Naive thymus-derived CD4-positive, alpha-beta T cell (primary cell): ENCODE measurements at regions of chr1 and their contacts with region 1.

Region 1: GRCh38 chr1:160777486-160778089 is 18.4 kb upstream of the LY9 start:
- DNase-seq: peak in 7 of 9 donors; percentile 50 to 74 (median 68)
- ATAC-seq: peak; percentile 80
- H3K4me3 ChIP-seq: no peak overlapping the region
- H3K4me3 Mint-ChIP-seq: no peak overlapping the region
- H3K27ac ChIP-seq: no peak overlapping the region
- H3K27ac Mint-ChIP-seq: peak overlapping the region in 4 of 9 donors; percentile 17 to 80 (median 37)
- H3K4me1 ChIP-seq: peaks cover 0 to 11% of the 10 kb centered on the region in 2 donors
- H3K4me1 Mint-ChIP-seq: peaks cover 12 to 42% (median 15%) of the 10 kb centered on the region in 7 donors
- H3K27me3 ChIP-seq: no peaks in the 10 kb centered on the region
- H3K27me3 Mint-ChIP-seq: no peaks in the 10 kb centered on the region

Region 2: DNA sequence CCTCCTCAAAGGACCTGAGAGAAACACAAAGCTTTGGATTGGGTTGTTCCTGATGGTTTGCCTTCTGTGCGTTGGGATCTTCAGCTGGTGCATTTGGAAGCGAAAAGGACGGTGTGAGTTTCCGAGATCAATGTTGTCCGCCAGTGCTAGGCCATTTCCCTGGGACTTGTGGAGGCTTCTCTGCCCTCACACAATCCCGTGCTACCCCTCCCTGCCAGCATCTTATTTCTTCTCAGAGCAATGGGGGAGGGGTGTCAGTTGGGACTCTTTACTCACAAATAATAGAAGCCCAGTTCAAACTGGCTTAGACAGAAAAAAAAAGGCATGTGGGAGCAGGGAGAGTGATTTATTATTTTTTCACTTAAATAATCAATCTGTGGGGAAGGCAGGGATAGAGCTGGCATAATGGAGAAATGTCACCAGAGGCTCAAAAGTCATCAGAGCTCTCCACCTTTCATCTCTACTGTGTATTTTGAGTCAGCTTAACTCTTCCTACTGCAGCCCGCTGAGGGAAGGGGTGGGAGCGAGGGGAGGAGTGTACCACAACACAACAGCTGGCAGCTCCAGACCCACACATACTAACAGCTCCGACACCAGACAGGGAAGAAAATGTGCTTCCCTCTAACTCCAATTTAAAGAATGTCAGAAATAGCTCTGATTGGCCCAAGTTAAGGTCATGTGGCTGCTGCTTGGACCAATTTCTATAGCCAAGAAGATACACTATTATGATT is 40.8 kb after region 1 on chr1:
- CTCF ChIA-PET with region 1: interaction called, 12 read pairs
- POLR2A ChIA-PET with region 1: no interaction called
- intact Hi-C with region 1: no loop called
- DNase-seq: no peak
- ATAC-seq: no peak
- H3K4me3 ChIP-seq: no peak overlapping the region
- H3K4me3 Mint-ChIP-seq: no peak overlapping the region
- H3K27ac ChIP-seq: no peak overlapping the region
- H3K27ac Mint-ChIP-seq: peak overlapping the region in 7 of 9 donors; percentile 41 to 82 (median 56)
- H3K4me1 ChIP-seq: no peaks in the 10 kb centered on the region
- H3K4me1 Mint-ChIP-seq: peaks cover 2 to 35% (median 13%) of the 10 kb centered on the region in 7 donors
- H3K27me3 ChIP-seq: no peaks in the 10 kb centered on the region
- H3K27me3 Mint-ChIP-seq: peaks cover 0 to 5% (median 0%) of the 10 kb centered on the region in 5 donors

Region 3: GRCh38 chr1:160830321-160831153 is 52.9 kb after region 1 on chr1:
- CTCF ChIA-PET with region 1: interaction called, 49 read pairs
- POLR2A ChIA-PET with region 1: interaction called, 9 read pairs
- intact Hi-C with region 1: loop called (anchors 1 kb)
- DNase-seq: peak; percentile 51 to 77 (median 67)
- ATAC-seq: peak; percentile 75
- H3K4me3 ChIP-seq: no peak overlapping the region
- H3K4me3 Mint-ChIP-seq: no peak overlapping the region
- H3K27ac ChIP-seq: peak overlapping the region; percentile 10
- H3K27ac Mint-ChIP-seq: peak overlapping the region in 8 of 9 donors; percentile 68 to 96 (median 86)
- H3K4me1 ChIP-seq: peaks cover 6 to 18% of the 10 kb centered on the region in 2 donors
- H3K4me1 Mint-ChIP-seq: peaks cover 20 to 54% (median 36%) of the 10 kb centered on the region in 7 donors
- H3K27me3 ChIP-seq: no peaks in the 10 kb centered on the region
- H3K27me3 Mint-ChIP-seq: no peaks in the 10 kb centered on the region

Region 4: GRCh38 chr1:160866001-160866694 is 88.6 kb after region 1 on chr1:
- CTCF ChIA-PET with region 1: no interaction called
- POLR2A ChIA-PET with region 1: no interaction called
- intact Hi-C with region 1: no loop called
- DNase-seq: no peak
- ATAC-seq: no peak
- H3K4me3 ChIP-seq: no peak overlapping the region
- H3K4me3 Mint-ChIP-seq: no peak overlapping the region
- H3K27ac ChIP-seq: no peak overlapping the region
- H3K27ac Mint-ChIP-seq: no peak overlapping the region
- H3K4me1 ChIP-seq: peaks cover 0 to 8% of the 10 kb centered on the region in 2 donors
- H3K4me1 Mint-ChIP-seq: peaks cover 13 to 31% (median 29%) of the 10 kb centered on the region in 7 donors
- H3K27me3 ChIP-seq: no peaks in the 10 kb centered on the region
- H3K27me3 Mint-ChIP-seq: peaks cover 0 to 16% (median 0%) of the 10 kb centered on the region in 5 donors

Region 5: GRCh38 chr1:160877221-160877620 is 99.6 kb after region 1 on chr1:
- CTCF ChIA-PET with region 1: interaction called, 5 read pairs
- POLR2A ChIA-PET with region 1: no interaction called
- intact Hi-C with region 1: loop called in 1 of 2 experiments (anchors 1 kb)
- DNase-seq: peak in 7 of 9 donors; percentile 32 to 72 (median 50)
- ATAC-seq: peak; percentile 83
- H3K4me3 ChIP-seq: no peak overlapping the region
- H3K4me3 Mint-ChIP-seq: peak overlapping the region in 2 of 10 donors; percentile 1 to 4
- H3K27ac ChIP-seq: no peak overlapping the region
- H3K27ac Mint-ChIP-seq: peak overlapping the region in 4 of 9 donors; percentile 5 to 15 (median 10)
- H3K4me1 ChIP-seq: peaks cover 8 to 10% of the 10 kb centered on the region in 2 donors
- H3K4me1 Mint-ChIP-seq: peaks cover 15 to 28% (median 23%) of the 10 kb centered on the region in 7 donors
- H3K27me3 ChIP-seq: no peaks in the 10 kb centered on the region
- H3K27me3 Mint-ChIP-seq: peaks cover 0 to 11% (median 0%) of the 10 kb centered on the region in 5 donors

Region 6: DNA sequence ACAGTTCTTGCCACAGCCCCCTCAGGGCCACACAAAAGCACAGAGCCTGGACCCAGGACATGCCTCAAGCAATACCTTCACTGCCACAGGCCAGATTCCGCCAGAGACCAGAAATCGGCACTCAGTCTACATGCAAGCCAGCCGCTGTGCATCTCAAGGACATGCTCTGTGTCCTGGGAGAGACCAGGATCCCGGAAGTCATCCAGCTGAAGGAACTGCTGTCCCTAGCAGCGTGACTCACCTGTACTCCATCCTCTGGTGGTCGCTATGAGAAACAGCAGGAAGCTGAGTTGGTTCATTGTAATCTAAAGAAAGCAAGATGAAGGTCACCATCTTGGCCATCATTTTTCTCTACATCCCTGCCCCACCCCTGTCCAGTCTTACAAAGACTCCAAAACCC is 107.0 kb after region 1 on chr1:
- CTCF ChIA-PET with region 1: no interaction called
- POLR2A ChIA-PET with region 1: no interaction called
- intact Hi-C with region 1: loop called in 1 of 2 experiments (anchors 5 kb)
- DNase-seq: peak in 2 of 9 donors; percentile 32
- ATAC-seq: no peak
- H3K4me3 ChIP-seq: no peak overlapping the region
- H3K4me3 Mint-ChIP-seq: no peak overlapping the region
- H3K27ac ChIP-seq: no peak overlapping the region
- H3K27ac Mint-ChIP-seq: no peak overlapping the region
- H3K4me1 ChIP-seq: no peaks in the 10 kb centered on the region
- H3K4me1 Mint-ChIP-seq: peaks cover 0 to 10% (median 0%) of the 10 kb centered on the region in 7 donors
- H3K27me3 ChIP-seq: no peaks in the 10 kb centered on the region
- H3K27me3 Mint-ChIP-seq: peaks cover 0 to 6% (median 0%) of the 10 kb centered on the region in 5 donors

Region 7: DNA sequence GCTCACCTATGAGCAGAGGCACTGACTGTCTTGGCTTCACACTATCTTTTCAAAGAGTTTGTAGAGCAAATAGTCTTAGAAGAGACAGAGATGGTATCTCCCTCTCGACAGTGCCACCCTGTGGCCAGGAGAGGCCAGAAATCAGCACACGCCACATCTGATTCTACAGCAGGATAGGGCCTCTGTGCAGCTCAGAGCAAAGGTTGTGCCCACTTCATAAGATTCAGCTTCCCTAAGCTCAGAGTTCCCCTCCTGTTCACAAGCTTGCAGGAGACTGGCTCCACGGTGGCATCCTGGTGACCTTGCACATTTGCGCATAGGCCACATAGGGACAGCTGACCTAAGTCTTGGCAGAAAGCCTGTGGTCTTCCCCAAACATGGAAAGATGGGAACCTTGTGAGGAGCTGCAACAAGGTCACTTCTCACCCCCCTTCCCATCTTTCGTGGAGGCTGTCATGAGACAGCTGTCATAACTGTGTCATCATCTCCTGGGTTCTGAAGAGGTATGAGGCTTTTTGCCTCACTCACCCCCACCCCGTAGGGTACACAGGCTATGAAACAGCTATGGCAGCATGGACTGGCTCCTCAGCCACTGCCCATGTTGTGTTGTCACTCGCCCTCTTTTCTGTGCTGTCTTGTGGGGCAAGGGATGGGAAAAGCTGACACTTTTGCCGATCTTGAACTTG is 174.0 kb after region 1 on chr1:
- CTCF ChIA-PET with region 1: interaction called, 44 read pairs
- POLR2A ChIA-PET with region 1: interaction called, 5 read pairs
- intact Hi-C with region 1: loop called (anchors 1 to 2 kb)
- DNase-seq: peak; percentile 53 to 80 (median 71)
- ATAC-seq: peak; percentile 92
- H3K4me3 ChIP-seq: no peak overlapping the region
- H3K4me3 Mint-ChIP-seq: no peak overlapping the region
- H3K27ac ChIP-seq: no peak overlapping the region
- H3K27ac Mint-ChIP-seq: peak overlapping the region in 2 of 9 donors; percentile 26 to 48
- H3K4me1 ChIP-seq: peaks cover 0 to 16% of the 10 kb centered on the region in 2 donors
- H3K4me1 Mint-ChIP-seq: peaks cover 6 to 21% (median 11%) of the 10 kb centered on the region in 7 donors
- H3K27me3 ChIP-seq: no peaks in the 10 kb centered on the region
- H3K27me3 Mint-ChIP-seq: no peaks in the 10 kb centered on the region